GM12878 (cell line): ENCODE measurements at regions of chr5 and their contacts with region 1.

Region 1: DNA sequence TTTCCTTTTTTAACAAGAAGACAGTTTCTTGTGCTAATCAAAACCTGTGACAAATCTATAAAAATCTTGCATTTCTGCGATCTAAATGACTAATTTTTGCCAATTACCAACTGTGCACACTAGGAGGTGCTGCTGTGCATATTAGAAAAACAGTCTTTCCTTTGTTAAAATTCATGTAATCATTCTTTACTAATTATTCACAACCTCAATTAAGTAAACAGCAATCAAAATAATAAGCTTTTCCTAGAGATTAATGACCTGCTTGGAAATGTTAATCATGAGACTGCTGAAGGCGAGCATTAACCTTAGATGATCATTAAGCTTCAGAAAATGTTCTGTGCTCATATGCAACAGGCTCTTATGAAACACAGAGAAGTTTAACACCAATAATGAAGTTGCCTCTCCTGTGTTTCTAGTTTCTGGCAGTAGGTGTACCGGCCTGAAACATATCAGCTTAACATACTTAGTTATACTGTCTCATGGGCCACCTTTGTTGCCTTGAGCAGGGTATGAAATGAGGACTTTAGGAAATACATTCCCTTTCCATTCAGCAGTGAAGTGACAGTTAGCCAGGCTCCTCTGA is 17.7 kb downstream of the RFESD start:
- DNase-seq: peak; percentile 11
- ATAC-seq: peak; percentile 38; the same call in 2 of the 3 replicates
- H3K4me3 ChIP-seq: no peak overlapping the region
- H3K27ac ChIP-seq: no peak overlapping the region
- H3K4me1 ChIP-seq: no peaks in the 10 kb centered on the region
- H3K27me3 ChIP-seq: no peaks in the 10 kb centered on the region
- CTCF ChIP-seq: peak; percentile 66 to 84 (median 80)
- EP300 ChIP-seq: no peak
- POLR2A ChIP-seq: no peak
- RAD21 ChIP-seq: peak; percentile 76

Region 2: DNA sequence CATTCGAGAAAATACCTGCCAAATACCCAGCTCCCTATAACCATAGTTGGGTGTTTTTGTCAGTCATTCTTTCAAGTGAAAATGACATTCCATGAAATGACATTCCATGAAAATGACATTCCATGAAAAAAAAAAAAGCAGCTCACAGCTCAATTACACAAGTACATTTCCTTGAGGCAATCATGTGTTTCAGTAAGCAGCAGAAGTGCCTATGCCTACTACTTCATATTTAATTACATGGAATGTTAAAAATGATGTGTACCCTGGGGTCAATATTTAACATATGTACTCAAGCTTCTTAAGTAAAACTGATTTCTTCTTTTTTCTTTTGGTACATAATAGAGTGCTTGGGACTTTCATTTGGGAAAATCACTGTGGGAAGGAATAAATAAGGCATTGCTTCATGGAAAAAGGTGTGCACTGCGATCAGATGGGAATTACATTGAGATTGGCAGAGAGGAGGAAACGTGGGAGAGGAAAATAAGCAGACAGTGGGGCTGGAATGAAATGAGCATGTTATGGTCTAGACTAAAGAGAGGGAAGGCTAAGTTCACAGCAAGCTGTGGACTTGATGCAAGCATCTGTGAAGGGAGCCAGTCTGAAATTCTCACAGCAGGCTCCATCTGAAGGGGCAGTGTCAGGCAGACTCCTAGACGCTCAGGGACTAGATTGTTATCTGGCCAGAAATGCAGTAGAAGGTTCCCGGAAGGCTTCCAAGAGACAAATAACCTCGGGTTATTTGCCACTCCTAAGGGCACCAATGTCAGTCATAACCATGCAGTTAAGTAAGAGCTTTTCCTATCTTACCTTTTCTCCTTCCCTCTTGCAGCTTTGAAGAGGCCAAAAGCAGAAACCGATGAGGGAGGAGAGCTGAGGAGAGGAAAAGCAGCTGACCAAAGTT is 33.7 kb after region 1 on chr5:
- CTCF ChIA-PET with region 1: interaction called, 7 read pairs
- POLR2A ChIA-PET with region 1: no interaction called
- RAD21 ChIA-PET with region 1: no interaction called
- SMC1A ChIA-PET with region 1: interaction called, 13 read pairs
- in situ Hi-C with region 1: no loop called
- intact Hi-C with region 1: no loop called
- DNase-seq: no peak
- ATAC-seq: no peak
- H3K4me3 ChIP-seq: no peak overlapping the region
- H3K27ac ChIP-seq: no peak overlapping the region
- H3K4me1 ChIP-seq: no peaks in the 10 kb centered on the region
- H3K27me3 ChIP-seq: no peaks in the 10 kb centered on the region
- CTCF ChIP-seq: no peak
- EP300 ChIP-seq: no peak
- POLR2A ChIP-seq: no peak
- RAD21 ChIP-seq: no peak

Region 3: DNA sequence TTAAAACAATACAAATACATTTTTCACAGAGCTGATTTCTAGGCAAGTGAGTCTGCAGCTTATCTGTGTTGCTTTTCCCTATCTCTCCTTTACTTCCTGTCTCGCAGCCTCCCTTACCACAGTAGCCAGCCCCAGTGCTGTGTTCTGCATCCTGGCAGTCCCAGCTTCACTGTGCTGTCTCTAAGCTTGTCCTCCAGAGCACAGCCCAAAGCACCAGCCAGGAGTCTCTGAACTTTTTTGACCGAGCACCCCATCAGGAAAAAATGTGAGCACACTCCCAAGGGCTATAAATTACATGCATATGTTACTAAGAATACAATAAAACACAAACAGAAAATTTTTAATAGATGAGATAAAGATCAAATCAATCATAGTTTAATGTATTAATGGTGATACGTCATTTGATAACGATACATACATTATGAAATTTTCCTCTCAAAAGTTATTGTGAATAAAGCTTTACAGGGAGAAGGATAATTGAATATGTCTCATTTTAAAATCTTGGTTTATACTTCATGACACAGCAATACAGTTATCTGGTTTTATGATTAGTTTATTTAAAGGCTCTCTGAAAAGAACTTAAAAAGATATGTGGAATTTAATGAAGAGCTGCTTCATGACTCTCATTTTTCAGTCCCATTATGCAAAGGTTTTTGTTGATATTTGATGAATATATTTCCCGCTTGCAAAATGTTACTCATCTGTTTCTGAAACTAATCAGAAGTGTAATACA is 59.5 kb after region 1 on chr5:
- CTCF ChIA-PET with region 1: interaction called, 23 read pairs
- POLR2A ChIA-PET with region 1: no interaction called
- RAD21 ChIA-PET with region 1: interaction called, 14 read pairs
- SMC1A ChIA-PET with region 1: interaction called, 10 read pairs
- in situ Hi-C with region 1: no loop called
- intact Hi-C with region 1: no loop called
- DNase-seq: no peak
- ATAC-seq: no peak
- H3K4me3 ChIP-seq: no peak overlapping the region
- H3K27ac ChIP-seq: no peak overlapping the region
- H3K4me1 ChIP-seq: peaks cover 20% of the 10 kb centered on the region
- H3K27me3 ChIP-seq: no peaks in the 10 kb centered on the region
- CTCF ChIP-seq: no peak
- EP300 ChIP-seq: no peak
- POLR2A ChIP-seq: no peak
- RAD21 ChIP-seq: no peak

Region 4: GRCh38 chr5:95773335-95774059 is 109.2 kb after region 1 on chr5:
- CTCF ChIA-PET with region 1: interaction called, 177 read pairs
- POLR2A ChIA-PET with region 1: interaction called, 3 read pairs
- RAD21 ChIA-PET with region 1: interaction called, 10 read pairs
- SMC1A ChIA-PET with region 1: interaction called, 52 read pairs
- in situ Hi-C with region 1: no loop called
- intact Hi-C with region 1: no loop called
- DNase-seq: no peak
- ATAC-seq: peak; percentile 35; the same call in 2 of the 3 replicates
- H3K4me3 ChIP-seq: no peak overlapping the region
- H3K27ac ChIP-seq: no peak overlapping the region
- H3K4me1 ChIP-seq: peaks cover 4% of the 10 kb centered on the region; the same call in 1 of the 2 replicates
- H3K27me3 ChIP-seq: no peaks in the 10 kb centered on the region
- CTCF ChIP-seq: no peak
- EP300 ChIP-seq: no peak
- POLR2A ChIP-seq: no peak
- RAD21 ChIP-seq: no peak